GM12878 (cell line): ENCODE measurements at regions of chr12 and their contacts with region 1.

Region 1: DNA sequence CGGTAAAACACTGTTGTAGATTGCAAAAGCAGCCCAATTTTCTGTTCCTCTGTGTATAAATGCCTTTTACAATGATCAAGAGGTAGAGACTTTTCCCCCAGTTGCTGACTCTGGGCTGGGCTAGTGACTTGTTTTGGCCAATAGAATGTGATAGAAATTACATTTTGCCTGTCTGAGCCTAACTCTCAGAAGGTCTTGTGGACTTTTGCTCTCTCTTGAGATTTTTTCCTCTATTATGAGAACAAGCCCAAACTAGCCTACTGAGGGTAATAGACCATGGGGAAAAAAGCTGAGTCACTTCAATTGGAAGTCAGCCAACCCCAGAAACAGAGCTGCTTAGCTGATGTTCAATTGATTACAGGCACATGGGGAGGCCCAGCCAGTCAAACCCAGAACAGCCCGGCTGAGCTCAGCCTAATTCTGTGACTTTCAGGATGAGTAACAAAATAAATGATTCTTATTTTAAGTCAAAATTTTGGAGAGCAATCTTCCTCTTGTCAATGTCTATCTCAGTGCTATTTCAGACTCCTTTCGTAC is 61.4 kb downstream of the MYF5 start:
- DNase-seq: peak; percentile 99
- ATAC-seq: peak; percentile 95
- H3K4me3 ChIP-seq: 0 out of 2 replicates have a peak overlapping the region, but pooled peaks have one; percentile 35
- H3K27ac ChIP-seq: peak overlapping the region; percentile 95
- H3K4me1 ChIP-seq: peaks cover 19% of the 10 kb centered on the region
- H3K27me3 ChIP-seq: no peaks in the 10 kb centered on the region
- CTCF ChIP-seq: no peak
- EP300 ChIP-seq: peak; percentile 92 to 93; a peak in 3 of 4 replicates
- POLR2A ChIP-seq: no peak
- RAD21 ChIP-seq: no peak

Region 2: DNA sequence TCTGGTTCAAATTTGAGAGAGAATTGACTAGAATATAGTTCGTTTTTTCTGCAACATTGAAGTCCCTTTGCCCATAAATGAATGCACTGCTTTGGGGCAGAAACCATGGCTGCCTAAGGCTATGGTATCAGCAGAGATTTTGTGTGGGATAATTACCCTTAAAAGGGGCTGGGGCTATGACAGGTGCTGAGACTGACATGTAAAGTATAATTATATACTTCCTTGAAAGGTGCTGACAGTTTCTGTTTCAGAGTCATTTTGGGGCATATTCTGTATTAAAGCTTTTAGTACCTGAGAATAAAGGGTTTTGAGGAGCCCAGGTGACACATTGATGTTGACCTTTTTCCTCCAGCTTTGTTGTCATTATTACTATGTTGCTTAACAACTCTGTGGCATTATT is 484.3 kb before region 1 on chr12:
- CTCF ChIA-PET with region 1: no interaction called
- POLR2A ChIA-PET with region 1: no interaction called
- RAD21 ChIA-PET with region 1: no interaction called
- SMC1A ChIA-PET with region 1: interaction called, 4 read pairs
- in situ Hi-C with region 1: loop called (anchors 10 kb)
- intact Hi-C with region 1: loop called (anchors 5 kb)
- DNase-seq: peak; percentile 43
- ATAC-seq: peak; percentile 78
- H3K4me3 ChIP-seq: no peak overlapping the region
- H3K27ac ChIP-seq: peak overlapping the region; percentile 67
- H3K4me1 ChIP-seq: peaks cover 42% of the 10 kb centered on the region
- H3K27me3 ChIP-seq: no peaks in the 10 kb centered on the region
- CTCF ChIP-seq: no peak
- EP300 ChIP-seq: peak in 1 of 2 experiments; percentile 72; a peak in 1 of 4 replicates
- POLR2A ChIP-seq: no peak
- RAD21 ChIP-seq: no peak

Region 3: DNA sequence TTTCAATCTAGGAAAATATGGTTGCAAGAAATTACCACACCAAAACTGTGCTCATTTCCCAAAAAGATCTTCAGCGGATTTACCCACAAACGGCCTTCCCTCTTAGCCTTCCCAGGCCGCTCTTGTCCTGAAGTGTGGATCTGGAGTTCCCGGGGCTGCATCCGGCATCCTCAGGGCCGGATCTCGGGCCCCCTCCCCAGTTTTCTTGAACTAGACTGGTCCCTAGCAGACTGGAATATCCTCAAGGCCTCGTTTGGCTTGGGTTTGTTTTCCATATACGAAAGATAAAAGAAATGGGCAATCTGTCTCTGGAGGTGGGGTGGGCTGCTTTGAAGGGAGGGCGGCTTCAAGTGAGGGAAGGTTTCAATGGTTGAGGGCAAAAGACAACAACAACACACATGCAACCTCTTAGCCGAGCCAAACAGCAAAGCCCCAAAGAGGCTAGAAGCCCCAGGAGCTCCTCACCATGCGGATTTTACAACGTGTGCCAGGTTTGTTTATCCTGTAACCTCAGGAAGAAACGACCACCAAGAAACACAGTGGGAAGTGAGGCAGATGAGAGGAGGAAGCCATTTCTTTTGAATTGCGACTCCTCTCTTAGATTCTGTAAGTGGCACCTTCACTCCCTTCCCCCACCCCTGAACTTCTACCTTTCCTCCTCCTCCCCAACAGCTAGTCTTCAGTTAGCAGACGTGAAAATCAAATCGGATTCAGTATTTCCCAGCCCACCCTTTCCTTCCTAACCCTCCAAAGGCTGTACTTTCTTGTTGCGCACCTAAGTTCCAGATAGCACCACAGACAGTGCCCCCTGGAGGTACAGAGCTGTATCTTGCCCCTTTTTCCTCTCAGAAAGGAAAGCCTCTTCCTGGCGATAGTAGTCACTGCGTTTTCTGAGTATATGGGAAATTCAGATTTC is 68.0 kb before region 1 on chr12:
- CTCF ChIA-PET with region 1: no interaction called
- POLR2A ChIA-PET with region 1: no interaction called
- RAD21 ChIA-PET with region 1: no interaction called
- SMC1A ChIA-PET with region 1: no interaction called
- in situ Hi-C with region 1: no loop called
- intact Hi-C with region 1: no loop called
- DNase-seq: no peak
- ATAC-seq: peak; percentile 91
- H3K4me3 ChIP-seq: no peak overlapping the region
- H3K27ac ChIP-seq: no peak overlapping the region
- H3K4me1 ChIP-seq: no peaks in the 10 kb centered on the region
- H3K27me3 ChIP-seq: peaks cover 9 to 20% of the 10 kb centered on the region in 2 experiments
- CTCF ChIP-seq: peak; percentile 54 to 80 (median 59); a peak in 5 of 6 replicates
- EP300 ChIP-seq: no peak
- POLR2A ChIP-seq: no peak
- RAD21 ChIP-seq: peak; percentile 49

Region 4: DNA sequence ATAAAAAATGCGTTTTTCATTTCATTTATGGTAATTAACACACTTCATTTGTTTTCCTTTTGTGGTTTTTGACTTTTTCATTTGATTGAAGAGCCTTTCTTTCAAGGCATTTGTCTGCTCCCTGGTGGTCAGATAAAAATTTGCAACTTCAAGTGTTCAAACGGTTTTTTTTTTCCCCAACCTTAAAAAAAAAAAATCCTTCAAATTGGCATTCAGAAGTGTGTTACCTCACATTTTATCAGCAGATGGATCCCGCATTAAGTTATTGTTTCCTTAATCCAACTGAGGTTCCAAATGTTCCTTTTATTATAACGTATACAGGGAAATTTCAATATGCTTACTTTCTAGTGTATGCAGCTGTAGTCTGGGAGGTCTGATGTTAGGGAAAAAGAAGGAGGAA is 14.2 kb before region 1 on chr12:
- CTCF ChIA-PET with region 1: interaction called, 16 read pairs
- POLR2A ChIA-PET with region 1: no interaction called
- RAD21 ChIA-PET with region 1: no interaction called
- SMC1A ChIA-PET with region 1: interaction called, 7 read pairs
- in situ Hi-C with region 1: no loop called
- intact Hi-C with region 1: no loop called
- DNase-seq: no peak
- ATAC-seq: peak; percentile 21; the same call in 2 of the 3 replicates
- H3K4me3 ChIP-seq: no peak overlapping the region
- H3K27ac ChIP-seq: no peak overlapping the region
- H3K4me1 ChIP-seq: no peaks in the 10 kb centered on the region
- H3K27me3 ChIP-seq: no peaks in the 10 kb centered on the region
- CTCF ChIP-seq: peak; percentile 36 to 51 (median 50); a peak in 5 of 6 replicates
- EP300 ChIP-seq: no peak
- POLR2A ChIP-seq: no peak
- RAD21 ChIP-seq: peak; percentile 86

Region 5: GRCh38 chr12:80807640-80808288 is 29.7 kb after region 1 on chr12:
- CTCF ChIA-PET with region 1: interaction called, 10 read pairs
- POLR2A ChIA-PET with region 1: interaction called, 9 read pairs
- RAD21 ChIA-PET with region 1: interaction called, 26 read pairs
- SMC1A ChIA-PET with region 1: interaction called, 35 read pairs
- in situ Hi-C with region 1: no loop called
- intact Hi-C with region 1: loop called (anchors 1 kb)
- DNase-seq: peak; percentile 59
- ATAC-seq: peak; percentile 95
- H3K4me3 ChIP-seq: no peak overlapping the region
- H3K27ac ChIP-seq: no peak overlapping the region
- H3K4me1 ChIP-seq: peaks cover 23% of the 10 kb centered on the region
- H3K27me3 ChIP-seq: no peaks in the 10 kb centered on the region
- CTCF ChIP-seq: no peak
- EP300 ChIP-seq: peak in 1 of 2 experiments; percentile 39; a peak in 1 of 4 replicates
- POLR2A ChIP-seq: no peak
- RAD21 ChIP-seq: no peak